ENCODE measurements at regions of chr1 and their contacts with region 1.

Region 1: GRCh38 chr1:204363335-204364124 is 3.8 kb upstream of the PLEKHA6 start:
- DNase-seq: peak; percentile 83
- H3K4me3 ChIP-seq: peak overlapping the region in 7 of 8 donors; percentile 14 to 65 (median 35)
- H3K27ac ChIP-seq: peak overlapping the region in 5 of 8 donors; percentile 31 to 61 (median 49)
- H3K4me1 ChIP-seq: peaks cover 8 to 55% (median 33%) of the 10 kb centered on the region in 6 donors
- H3K27me3 ChIP-seq: peaks cover 0 to 46% (median 3%) of the 10 kb centered on the region in 7 donors
- CTCF ChIP-seq: peak; percentile 92 to 98 (median 96)
- POLR2A ChIP-seq: no peak

Region 2: DNA sequence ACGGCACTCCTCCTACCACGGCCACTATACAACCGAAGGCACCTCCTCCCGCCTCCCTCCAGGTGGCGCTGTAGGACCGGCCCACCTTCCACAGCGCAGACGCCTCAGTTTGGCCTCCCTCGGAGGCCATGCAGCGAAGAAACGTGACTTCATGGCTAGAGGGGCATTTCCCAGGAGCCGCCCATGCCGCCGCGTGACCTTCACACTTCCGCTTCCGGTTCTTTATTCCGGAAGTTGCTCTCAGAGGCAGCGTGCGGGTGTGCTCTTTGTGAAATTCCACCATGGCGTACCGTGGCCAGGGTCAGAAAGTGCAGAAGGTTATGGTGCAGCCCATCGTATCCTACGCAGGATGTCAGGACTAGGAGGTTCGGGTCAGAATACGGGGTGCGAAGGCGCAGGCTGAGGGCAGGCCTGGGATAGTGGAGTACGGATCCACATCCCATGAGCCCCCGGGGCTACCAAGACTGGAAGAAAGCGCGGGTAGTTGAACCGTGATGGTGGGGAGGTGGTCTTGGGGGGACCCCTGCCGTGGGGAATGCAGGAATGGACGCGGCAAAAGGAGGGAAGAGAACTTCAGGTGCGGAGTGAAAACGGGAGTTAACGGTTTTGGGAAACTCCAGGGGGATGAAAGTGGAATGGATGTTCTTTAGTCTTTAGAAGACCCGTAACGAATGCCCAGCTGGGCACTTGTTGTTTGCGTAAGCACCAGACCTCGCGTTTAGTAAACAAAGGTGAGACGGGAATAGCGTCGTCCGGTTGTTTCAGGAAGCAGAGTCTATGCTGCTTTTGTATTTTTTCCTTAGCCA is 501.9 kb before region 1 on chr1 and contains the start of gene SNRPE:
- intact Hi-C with region 1: loop called (anchors 10 kb)
- DNase-seq: peak; percentile 99
- H3K4me3 ChIP-seq: peak within 1 kb of the TSS; percentile 89 to 98 (median 96)
- H3K27ac ChIP-seq: peak within 1 kb of the TSS; percentile 56 to 85 (median 75)
- H3K4me1 ChIP-seq: peaks cover 6 to 33% (median 26%) of the 10 kb centered on the region in 6 donors
- H3K27me3 ChIP-seq: no peaks in the 10 kb centered on the region
- CTCF ChIP-seq: peak; percentile 90 to 100 (median 98)
- POLR2A ChIP-seq: no peak
- total RNA-seq, gene SNRPE: 30.1 to 76.9 (median 61.7) TPM

Region 3: GRCh38 chr1:203954788-203955566 is 408.6 kb before region 1 on chr1:
- intact Hi-C with region 1: no loop called
- DNase-seq: no peak
- H3K4me3 ChIP-seq: peak overlapping the region in 1 of 8 donors; percentile 33
- H3K27ac ChIP-seq: peak overlapping the region in 6 of 8 donors; percentile 2 to 87 (median 55)
- H3K4me1 ChIP-seq: no peaks in the 10 kb centered on the region
- H3K27me3 ChIP-seq: peaks cover 0 to 4% (median 0%) of the 10 kb centered on the region in 7 donors
- CTCF ChIP-seq: no peak
- POLR2A ChIP-seq: no peak

Region 4: GRCh38 chr1:204162231-204163074 is 201.1 kb before region 1 on chr1:
- intact Hi-C with region 1: loop called (anchors 5 kb)
- DNase-seq: peak; percentile 93
- H3K4me3 ChIP-seq: no peak overlapping the region
- H3K27ac ChIP-seq: no peak overlapping the region
- H3K4me1 ChIP-seq: peaks cover 0 to 12% (median 3%) of the 10 kb centered on the region in 6 donors
- H3K27me3 ChIP-seq: peaks cover 0 to 38% (median 0%) of the 10 kb centered on the region in 7 donors
- CTCF ChIP-seq: peak; percentile 88 to 99 (median 98)
- POLR2A ChIP-seq: no peak

Region 5: GRCh38 chr1:204213668-204214662 is 149.6 kb before region 1 on chr1 and contains the start of gene GOLT1A:
- intact Hi-C with region 1: loop called (anchors 5 kb)
- DNase-seq: no peak
- H3K4me3 ChIP-seq: peak within 1 kb of the TSS in 2 of 8 donors; percentile 17 to 53
- H3K27ac ChIP-seq: no peak within 1 kb of the TSS
- H3K4me1 ChIP-seq: peaks cover 5 to 12% (median 10%) of the 10 kb centered on the region in 6 donors
- H3K27me3 ChIP-seq: peaks cover 0 to 26% (median 0%) of the 10 kb centered on the region in 7 donors
- CTCF ChIP-seq: peak in 10 of 11 experiments; percentile 17 to 70 (median 54)
- POLR2A ChIP-seq: no peak
- total RNA-seq, gene GOLT1A: not detected

Region 6: GRCh38 chr1:204257954-204258752 is 105.4 kb before region 1 on chr1:
- intact Hi-C with region 1: loop called (anchors 10 kb)
- DNase-seq: peak; percentile 84
- H3K4me3 ChIP-seq: no peak overlapping the region
- H3K27ac ChIP-seq: no peak overlapping the region
- H3K4me1 ChIP-seq: no peaks in the 10 kb centered on the region
- H3K27me3 ChIP-seq: no peaks in the 10 kb centered on the region
- CTCF ChIP-seq: peak; percentile 7 to 75 (median 60)
- POLR2A ChIP-seq: no peak

Region 7: DNA sequence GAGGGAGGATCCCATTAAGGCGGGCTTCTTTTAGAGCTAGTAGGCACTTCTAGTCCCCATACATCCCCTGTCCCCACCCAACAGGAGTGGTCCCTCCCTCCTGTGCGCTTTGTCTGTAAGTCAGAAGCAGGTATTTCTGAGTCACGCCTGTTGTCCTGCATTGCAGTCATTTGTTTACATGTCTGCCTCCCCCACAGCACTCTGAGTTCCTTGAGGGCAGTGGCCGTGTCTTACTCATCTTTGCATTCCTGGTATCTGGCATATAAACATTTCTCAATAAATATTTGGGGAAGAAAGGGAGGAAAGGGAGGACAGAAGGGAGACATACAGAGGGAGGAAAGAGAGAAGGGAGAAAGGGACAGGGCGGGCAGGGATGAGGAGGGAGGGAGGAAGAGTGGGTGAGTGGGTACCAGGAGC is 44.0 kb before region 1 on chr1:
- intact Hi-C with region 1: no loop called
- DNase-seq: no peak
- H3K4me3 ChIP-seq: no peak overlapping the region
- H3K27ac ChIP-seq: no peak overlapping the region
- H3K4me1 ChIP-seq: peaks cover 0 to 10% (median 0%) of the 10 kb centered on the region in 6 donors
- H3K27me3 ChIP-seq: no peaks in the 10 kb centered on the region
- CTCF ChIP-seq: no peak
- POLR2A ChIP-seq: no peak

Region 8: GRCh38 chr1:204477036-204477740 is 113.7 kb after region 1 on chr1:
- intact Hi-C with region 1: no loop called
- DNase-seq: no peak
- H3K4me3 ChIP-seq: no peak overlapping the region
- H3K27ac ChIP-seq: peak overlapping the region in 6 of 8 donors; percentile 27 to 83 (median 74)
- H3K4me1 ChIP-seq: peaks cover 67 to 96% (median 81%) of the 10 kb centered on the region in 6 donors
- H3K27me3 ChIP-seq: no peaks in the 10 kb centered on the region
- CTCF ChIP-seq: no peak
- POLR2A ChIP-seq: no peak

Measured in spleen (tissue), 13 donors.